ENCODE measurements at regions of chr19 and their contacts with region 1.

Region 1: GRCh38 chr19:13093407-13094105 is 9.1 kb downstream of the LYL1 start:
- DNase-seq: peak; percentile 68 to 91 (median 76)
- ATAC-seq: peak; percentile 73
- H3K4me3 ChIP-seq: no peak overlapping the region
- H3K4me3 Mint-ChIP-seq: peak overlapping the region; percentile 51
- H3K27ac ChIP-seq: no peak overlapping the region
- H3K27ac Mint-ChIP-seq: no peak overlapping the region
- H3K4me1 ChIP-seq: peaks cover 48% of the 10 kb centered on the region
- H3K4me1 Mint-ChIP-seq: peaks cover 27% of the 10 kb centered on the region
- H3K27me3 ChIP-seq: peaks cover 20 to 23% of the 10 kb centered on the region in 2 experiments
- H3K27me3 Mint-ChIP-seq: peaks cover 29% of the 10 kb centered on the region
- CTCF ChIP-seq: peak; percentile 89

Region 2: DNA sequence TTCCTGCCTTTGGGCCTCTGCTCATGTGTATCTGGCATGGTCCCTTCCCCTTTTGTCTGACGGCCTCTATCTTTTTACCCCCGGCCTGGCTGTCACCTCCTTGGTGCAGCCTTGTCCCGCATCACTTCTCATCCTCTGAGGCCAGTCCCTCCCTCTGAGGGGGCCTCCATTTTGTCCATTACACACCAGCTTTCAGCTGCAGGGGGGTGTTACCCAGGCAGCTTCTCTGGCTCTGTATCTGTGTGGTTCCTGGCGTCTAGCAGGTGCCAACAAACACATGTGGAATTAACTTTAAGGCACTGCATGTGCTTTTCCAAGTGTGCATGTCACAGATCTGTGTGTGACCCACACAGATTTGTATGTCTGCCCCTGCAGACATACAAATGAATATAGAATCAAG is 43.3 kb before region 1 on chr19:
- CTCF ChIA-PET with region 1: no interaction called
- POLR2A ChIA-PET with region 1: no interaction called
- intact Hi-C with region 1: no loop called
- DNase-seq: no peak
- ATAC-seq: no peak
- H3K4me3 ChIP-seq: no peak overlapping the region
- H3K4me3 Mint-ChIP-seq: no peak overlapping the region
- H3K27ac ChIP-seq: no peak overlapping the region
- H3K27ac Mint-ChIP-seq: no peak overlapping the region
- H3K4me1 ChIP-seq: peaks cover 14% of the 10 kb centered on the region
- H3K4me1 Mint-ChIP-seq: peaks cover 11% of the 10 kb centered on the region
- H3K27me3 ChIP-seq: peaks cover 0 to 5% of the 10 kb centered on the region in 2 experiments
- H3K27me3 Mint-ChIP-seq: no peaks in the 10 kb centered on the region
- CTCF ChIP-seq: no peak

Region 3: GRCh38 chr19:13060964-13061927 is 32.3 kb before region 1 on chr19:
- CTCF ChIA-PET with region 1: interaction called, 25 read pairs
- POLR2A ChIA-PET with region 1: interaction called, 6 read pairs
- intact Hi-C with region 1: no loop called
- DNase-seq: peak; percentile 58 to 86 (median 73)
- ATAC-seq: peak; percentile 99
- H3K4me3 ChIP-seq: peak overlapping the region; percentile 54
- H3K4me3 Mint-ChIP-seq: peak overlapping the region; percentile 81
- H3K27ac ChIP-seq: no peak overlapping the region
- H3K27ac Mint-ChIP-seq: no peak overlapping the region
- H3K4me1 ChIP-seq: peaks cover 16% of the 10 kb centered on the region
- H3K4me1 Mint-ChIP-seq: peaks cover 8% of the 10 kb centered on the region
- H3K27me3 ChIP-seq: peaks cover 11 to 16% of the 10 kb centered on the region in 2 experiments
- H3K27me3 Mint-ChIP-seq: peaks cover 22% of the 10 kb centered on the region
- CTCF ChIP-seq: peak; percentile 96

Measured in CD4-positive, alpha-beta T cell (primary cell).